ENCODE measurements at regions of chr1 and their contacts with region 1.

Region 1: DNA sequence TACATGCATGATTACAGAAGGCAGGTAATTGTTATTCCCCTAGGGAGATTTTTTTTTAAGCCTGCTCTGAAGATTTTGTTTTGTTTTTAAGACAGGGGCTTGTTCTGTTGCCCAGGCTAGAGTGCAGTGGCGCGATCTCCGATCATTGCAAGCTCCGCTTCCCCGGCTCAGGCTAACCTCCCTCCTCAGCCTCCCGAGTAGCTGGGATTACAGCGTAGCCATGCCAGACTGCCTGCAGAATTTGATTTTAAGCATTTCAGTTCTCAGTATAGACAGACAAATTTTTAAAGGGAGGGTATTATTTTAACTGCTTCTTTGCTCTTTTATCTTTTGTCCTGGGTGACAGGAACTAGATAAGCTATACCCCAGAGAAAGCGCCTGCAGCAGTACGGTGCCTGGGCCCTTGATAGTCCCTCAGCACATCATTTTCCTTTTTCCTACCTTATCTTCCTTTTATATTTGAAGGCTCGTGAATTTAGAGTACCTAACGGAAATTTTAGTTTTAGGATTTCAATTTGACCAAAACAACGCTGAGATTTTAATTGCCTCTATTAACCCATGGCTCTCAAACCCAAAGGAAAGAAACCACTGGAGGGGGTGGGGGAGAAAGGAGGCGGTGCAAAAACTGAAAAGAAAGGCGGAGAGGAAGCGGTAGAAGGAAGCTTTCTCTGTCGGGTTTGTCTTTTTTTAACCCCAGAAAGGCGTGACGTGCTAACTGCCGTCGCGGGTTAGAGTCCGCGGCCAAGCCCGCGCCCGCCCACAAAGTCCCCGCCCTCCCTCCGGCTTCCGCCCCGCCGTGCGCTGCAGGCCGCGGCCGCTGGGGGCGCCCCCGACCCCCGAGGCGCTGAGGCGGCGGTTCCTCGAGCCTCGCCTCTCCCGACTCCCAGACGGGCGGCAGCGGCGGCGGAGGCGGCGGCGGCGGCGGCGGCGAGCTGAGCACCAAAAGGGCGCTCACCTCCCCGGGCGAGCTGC is at the start of gene EEIG2:
- DNase-seq: peak; percentile 91
- CTCF ChIP-seq: peak; percentile 86

Region 2: GRCh38 chr1:108327534-108328462 is 231.7 kb before region 1 on chr1:
- CTCF ChIA-PET with region 1: no interaction called
- POLR2A ChIA-PET with region 1: no interaction called
- DNase-seq: no peak
- CTCF ChIP-seq: no peak

Region 3: DNA sequence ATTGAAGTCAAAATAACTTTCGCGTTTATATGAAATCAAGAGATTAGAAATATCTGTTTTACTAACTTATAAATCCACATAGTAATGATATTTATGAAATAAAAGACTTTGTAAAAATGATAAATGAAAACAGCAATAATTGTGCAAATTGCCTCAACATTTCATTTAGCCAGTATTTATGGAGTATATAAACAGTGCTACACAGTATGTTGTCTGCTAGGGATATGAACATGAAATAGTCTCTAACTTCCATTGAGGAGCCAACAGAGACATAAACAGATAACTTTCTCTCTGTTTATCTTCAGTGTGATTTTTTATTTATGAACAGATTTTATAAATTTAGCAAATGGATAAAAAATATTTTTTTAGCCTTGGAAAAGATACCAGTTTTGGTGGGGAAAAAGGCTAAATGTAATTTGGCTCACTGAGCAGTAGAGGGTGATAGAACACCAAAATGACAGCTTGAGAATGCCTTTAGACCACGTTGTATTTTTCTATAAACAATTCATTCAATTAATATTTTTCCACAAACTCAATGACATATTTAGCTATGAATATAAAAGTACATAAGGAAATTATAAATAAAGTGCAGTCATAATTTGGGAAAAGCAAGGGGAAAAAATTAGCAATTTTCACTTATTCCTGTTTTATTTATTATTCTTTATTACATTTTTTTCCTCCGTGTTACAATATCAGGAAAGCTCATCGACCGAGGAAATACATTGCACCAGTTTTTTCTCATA is 47.1 kb before region 1 on chr1:
- CTCF ChIA-PET with region 1: interaction called, 179 read pairs
- POLR2A ChIA-PET with region 1: no interaction called
- DNase-seq: no peak
- CTCF ChIP-seq: peak; percentile 82

Region 4: DNA sequence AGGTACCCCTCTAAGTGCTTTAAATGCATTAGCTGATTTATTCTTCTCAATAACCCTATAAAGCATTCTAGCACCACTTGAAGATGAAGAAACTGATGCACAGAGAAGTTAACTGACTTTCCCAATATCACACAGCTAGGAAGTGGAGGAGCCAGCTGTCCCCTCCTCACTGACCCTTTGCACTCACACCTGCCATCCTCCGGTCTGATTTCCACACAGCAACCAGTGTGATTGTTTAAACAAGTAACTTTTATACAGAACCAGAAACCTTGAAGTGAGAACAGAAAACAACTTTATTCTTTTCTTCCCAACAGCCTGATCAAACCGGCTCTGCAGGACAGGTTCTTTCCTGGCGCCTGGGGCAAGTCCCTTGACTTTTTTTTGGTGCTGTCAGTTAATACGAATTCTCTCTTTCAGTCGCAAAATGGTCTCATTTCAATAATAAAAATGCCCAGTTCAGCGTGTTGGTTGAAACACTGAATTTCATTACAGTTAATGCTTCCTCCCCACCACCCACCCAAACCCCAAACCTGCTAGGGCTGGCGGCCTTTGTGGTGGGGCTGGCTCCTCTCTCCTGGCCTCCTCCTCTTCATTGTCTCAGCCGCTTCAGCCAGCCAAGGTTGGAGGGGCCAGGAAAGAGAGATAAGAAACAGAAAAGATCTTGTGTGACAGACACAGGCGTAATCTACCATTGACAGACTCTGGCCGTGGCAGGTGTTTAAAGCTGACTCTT is 26.0 kb before region 1 on chr1:
- CTCF ChIA-PET with region 1: interaction called, 30 read pairs
- POLR2A ChIA-PET with region 1: no interaction called
- DNase-seq: peak; percentile 43
- CTCF ChIP-seq: no peak

Region 5: DNA sequence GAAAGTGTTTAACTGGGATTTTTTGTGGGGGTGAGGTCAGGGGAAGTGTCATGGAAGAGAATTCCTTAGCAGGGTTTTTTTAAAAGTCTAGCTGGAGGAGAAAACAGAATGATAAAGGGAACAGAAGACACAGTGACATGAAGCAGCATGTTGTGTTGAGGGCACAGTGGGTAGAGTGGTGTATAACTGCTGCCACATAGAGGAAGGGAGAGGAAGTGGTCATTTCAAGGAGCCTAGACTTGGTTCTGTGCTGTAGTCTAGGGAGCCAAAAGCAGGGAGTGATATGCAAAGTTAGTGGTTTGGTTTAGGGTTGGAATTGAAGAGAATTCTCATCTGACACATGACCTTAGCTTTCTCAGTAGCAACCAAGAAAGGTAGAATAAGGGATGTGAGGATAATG is 10.6 kb after region 1 on chr1:
- CTCF ChIA-PET with region 1: interaction called, 46 read pairs
- POLR2A ChIA-PET with region 1: no interaction called
- DNase-seq: peak; percentile 45
- CTCF ChIP-seq: peak; percentile 58

Region 6: DNA sequence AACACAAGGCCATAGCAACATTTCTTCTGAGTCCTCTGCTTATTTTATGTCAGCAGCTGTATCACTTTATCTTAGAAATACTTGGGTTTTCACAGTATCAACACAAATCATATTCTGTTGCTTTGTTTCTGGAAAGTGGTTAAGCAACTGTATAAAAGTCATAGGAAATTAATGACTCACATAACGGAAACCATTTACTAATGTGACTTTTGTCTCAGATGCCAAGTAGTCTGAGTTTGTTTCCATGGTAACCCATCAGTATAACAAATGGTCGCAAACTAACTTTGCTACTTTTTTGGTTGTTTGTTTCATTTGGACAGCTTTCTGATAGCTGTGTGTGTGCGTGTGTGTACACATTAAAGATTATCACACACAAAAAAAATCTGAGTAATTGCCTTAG is 31.5 kb after region 1 on chr1:
- CTCF ChIA-PET with region 1: interaction called, 24 read pairs
- POLR2A ChIA-PET with region 1: no interaction called
- DNase-seq: no peak
- CTCF ChIP-seq: no peak

Region 7: GRCh38 chr1:108691942-108692723 is 132.6 kb after region 1 on chr1 and contains the start of gene PRPF38B:
- CTCF ChIA-PET with region 1: interaction called, 15 read pairs
- POLR2A ChIA-PET with region 1: no interaction called
- DNase-seq: peak; percentile 96
- CTCF ChIP-seq: no peak

Region 8: DNA sequence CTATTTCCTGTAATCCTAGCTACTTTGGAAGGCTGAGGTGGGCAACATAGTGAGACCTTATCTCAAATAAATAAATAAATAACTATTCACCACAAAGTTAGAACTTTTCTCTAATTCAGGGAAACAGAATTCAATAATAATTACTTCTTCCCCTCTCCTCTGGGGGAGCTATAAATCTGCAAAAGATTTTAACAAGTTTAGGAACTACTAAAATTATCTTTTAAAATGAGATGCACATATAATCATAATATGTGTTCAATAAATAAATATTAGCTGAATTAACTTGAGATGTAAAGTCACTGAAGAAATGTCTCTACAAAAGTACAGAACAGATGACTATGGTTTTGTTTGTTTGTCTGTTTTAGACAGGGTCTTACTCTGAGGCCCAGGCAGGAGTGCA is 468.3 kb after region 1 on chr1:
- CTCF ChIA-PET with region 1: no interaction called
- POLR2A ChIA-PET with region 1: no interaction called
- DNase-seq: no peak
- CTCF ChIP-seq: no peak

Measured in GM10248 (cell line).